ENCODE measurements at regions of chrX and their contacts with region 1.

Region 1: DNA sequence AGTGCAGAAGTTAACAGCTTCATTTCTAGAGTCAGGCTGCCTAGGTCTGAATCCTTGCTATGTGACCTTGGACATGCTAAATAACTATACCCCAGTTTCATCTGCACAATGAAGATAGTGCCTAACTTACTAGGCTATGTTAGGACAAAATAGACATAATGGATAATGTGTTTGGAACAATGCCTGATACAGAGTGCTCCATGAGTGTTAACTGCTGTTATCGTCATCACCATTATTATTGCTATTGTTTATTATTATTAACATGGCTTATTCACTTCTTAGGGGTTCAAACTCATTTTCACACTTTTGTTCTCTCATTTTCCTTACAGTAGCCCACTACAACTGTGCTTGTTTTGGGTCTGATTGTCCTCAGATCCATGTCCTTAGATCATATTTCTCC is 467.7 kb downstream of the SH2D1A start:
- DNase-seq: no peak
- H3K4me3 ChIP-seq: no peak overlapping the region
- H3K27ac ChIP-seq: no peak overlapping the region
- H3K4me1 ChIP-seq: no peaks in the 10 kb centered on the region
- H3K27me3 ChIP-seq: no peaks in the 10 kb centered on the region
- CTCF ChIP-seq: no peak
- POLR2A ChIP-seq: no peak

Region 2: DNA sequence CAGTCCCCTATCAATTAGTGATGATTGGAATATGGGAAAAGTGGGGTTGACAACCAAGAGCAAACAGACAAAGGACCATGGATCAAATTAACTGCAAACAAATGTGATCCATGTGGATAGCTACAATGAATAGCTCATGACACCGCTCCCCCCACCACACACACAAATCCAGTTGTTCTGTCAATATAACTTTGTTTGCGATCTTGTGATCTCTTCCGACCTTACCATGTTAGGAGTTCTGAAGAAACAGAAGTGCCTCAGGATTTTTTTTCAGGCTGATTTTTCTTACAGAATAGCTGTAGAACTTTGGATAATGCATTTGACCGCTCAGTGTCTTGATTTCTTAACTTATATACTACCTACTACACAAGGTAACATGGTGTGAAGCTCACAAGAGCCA is 351.2 kb before region 1 on chrX:
- intact Hi-C with region 1: no loop called
- DNase-seq: no peak
- H3K4me3 ChIP-seq: no peak overlapping the region
- H3K27ac ChIP-seq: no peak overlapping the region
- H3K4me1 ChIP-seq: no peaks in the 10 kb centered on the region
- H3K27me3 ChIP-seq: peaks cover 0 to 11% of the 10 kb centered on the region in 2 donors
- CTCF ChIP-seq: no peak
- POLR2A ChIP-seq: no peak

Region 3: GRCh38 chrX:124594017-124594651 is 220.0 kb before region 1 on chrX:
- intact Hi-C with region 1: no loop called
- DNase-seq: no peak
- H3K4me3 ChIP-seq: no peak overlapping the region
- H3K27ac ChIP-seq: no peak overlapping the region
- H3K4me1 ChIP-seq: no peaks in the 10 kb centered on the region
- H3K27me3 ChIP-seq: no peaks in the 10 kb centered on the region
- CTCF ChIP-seq: no peak
- POLR2A ChIP-seq: no peak

Region 4: DNA sequence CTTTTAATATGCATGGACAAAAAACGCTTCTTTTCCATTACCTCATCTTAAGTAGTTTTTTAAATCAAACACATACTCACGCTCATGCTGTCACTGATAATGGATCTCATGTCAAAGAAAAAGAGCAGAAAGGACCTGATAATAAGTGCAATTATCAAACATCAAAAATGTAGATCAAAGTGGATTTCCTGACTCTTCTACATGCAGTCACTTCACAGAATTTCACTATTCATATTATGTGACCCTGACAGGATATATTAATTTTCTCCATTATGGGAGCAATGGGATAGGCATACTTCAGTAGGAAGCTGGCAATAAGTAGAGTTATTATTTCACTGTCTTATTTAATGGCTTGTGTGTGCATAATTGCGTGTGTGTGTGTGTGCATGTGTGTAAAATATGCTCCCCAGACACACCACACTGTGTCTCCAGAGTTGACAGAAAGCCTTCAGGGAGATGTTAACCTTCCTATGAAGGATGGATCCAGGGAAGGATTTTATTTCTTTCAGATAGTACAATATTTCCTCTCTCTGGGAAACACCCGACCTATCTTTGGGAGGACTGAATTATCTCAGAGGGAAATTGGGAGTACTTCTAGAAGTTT is 22.5 kb before region 1 on chrX:
- intact Hi-C with region 1: loop called (anchors 1 kb)
- DNase-seq: no peak
- H3K4me3 ChIP-seq: no peak overlapping the region
- H3K27ac ChIP-seq: no peak overlapping the region
- H3K4me1 ChIP-seq: no peaks in the 10 kb centered on the region
- H3K27me3 ChIP-seq: peaks cover 0 to 7% of the 10 kb centered on the region in 2 donors
- CTCF ChIP-seq: no peak
- POLR2A ChIP-seq: no peak